Head of caudate nucleus (tissue), 42 donors: ENCODE measurements at regions of chr7 and their contacts with region 1.

Region 1: DNA sequence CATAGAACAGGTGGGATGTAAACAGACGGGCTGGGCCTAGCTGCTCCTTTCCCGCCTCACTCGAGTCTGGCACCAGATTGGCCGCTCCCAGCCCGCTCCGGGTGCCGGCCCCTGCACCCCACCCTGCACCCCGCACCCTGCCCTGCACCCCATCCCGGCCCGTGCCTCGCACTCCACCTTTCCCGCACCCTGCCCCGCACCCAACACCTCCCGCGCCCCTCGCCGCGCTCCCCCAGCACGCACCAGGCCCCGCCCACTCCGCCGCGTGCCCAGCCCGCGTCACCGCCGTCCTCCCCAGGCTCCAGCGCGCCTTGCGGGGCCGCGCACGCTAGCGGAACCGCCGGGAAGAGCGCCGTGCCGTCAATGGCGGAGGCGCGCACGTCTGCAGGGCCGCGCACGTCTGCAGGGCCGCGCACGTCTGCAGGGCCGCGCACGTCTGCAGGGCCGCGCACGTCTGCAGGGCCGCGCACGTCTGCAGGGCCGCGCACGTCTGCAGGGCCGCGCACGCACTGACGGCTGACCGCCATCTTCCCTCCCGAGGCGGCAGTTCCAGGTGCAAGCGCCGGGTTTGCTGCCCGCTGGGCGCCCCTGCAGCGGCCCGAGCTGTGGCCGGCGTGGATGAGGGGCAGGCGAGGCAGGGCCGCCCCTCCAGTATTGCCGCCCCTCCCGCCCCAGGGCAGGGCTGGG is at the start of gene UBE3C:
- DNase-seq: peak; percentile 64 to 96 (median 90)

Region 2: GRCh38 chr7:156875766-156876165 is 262.8 kb before region 1 on chr7:
- intact Hi-C with region 1: no loop called
- DNase-seq: no peak

Region 3: GRCh38 chr7:156892821-156893706 is 245.5 kb before region 1 on chr7 and contains the start of gene LMBR1:
- intact Hi-C with region 1: loop called (anchors 10 kb)
- DNase-seq: peak; percentile 83 to 97 (median 94)

Region 4: GRCh38 chr7:156949541-156950380 is 188.8 kb before region 1 on chr7 and contains the start of gene NOM1:
- intact Hi-C with region 1: loop called (anchors 10 kb)
- DNase-seq: peak; percentile 68 to 95 (median 89)

Region 5: GRCh38 chr7:157219154-157219553 is 80.6 kb after region 1 on chr7:
- intact Hi-C with region 1: no loop called
- DNase-seq: peak in 25 of 42 donors; percentile 13 to 77 (median 34)

Region 6: DNA sequence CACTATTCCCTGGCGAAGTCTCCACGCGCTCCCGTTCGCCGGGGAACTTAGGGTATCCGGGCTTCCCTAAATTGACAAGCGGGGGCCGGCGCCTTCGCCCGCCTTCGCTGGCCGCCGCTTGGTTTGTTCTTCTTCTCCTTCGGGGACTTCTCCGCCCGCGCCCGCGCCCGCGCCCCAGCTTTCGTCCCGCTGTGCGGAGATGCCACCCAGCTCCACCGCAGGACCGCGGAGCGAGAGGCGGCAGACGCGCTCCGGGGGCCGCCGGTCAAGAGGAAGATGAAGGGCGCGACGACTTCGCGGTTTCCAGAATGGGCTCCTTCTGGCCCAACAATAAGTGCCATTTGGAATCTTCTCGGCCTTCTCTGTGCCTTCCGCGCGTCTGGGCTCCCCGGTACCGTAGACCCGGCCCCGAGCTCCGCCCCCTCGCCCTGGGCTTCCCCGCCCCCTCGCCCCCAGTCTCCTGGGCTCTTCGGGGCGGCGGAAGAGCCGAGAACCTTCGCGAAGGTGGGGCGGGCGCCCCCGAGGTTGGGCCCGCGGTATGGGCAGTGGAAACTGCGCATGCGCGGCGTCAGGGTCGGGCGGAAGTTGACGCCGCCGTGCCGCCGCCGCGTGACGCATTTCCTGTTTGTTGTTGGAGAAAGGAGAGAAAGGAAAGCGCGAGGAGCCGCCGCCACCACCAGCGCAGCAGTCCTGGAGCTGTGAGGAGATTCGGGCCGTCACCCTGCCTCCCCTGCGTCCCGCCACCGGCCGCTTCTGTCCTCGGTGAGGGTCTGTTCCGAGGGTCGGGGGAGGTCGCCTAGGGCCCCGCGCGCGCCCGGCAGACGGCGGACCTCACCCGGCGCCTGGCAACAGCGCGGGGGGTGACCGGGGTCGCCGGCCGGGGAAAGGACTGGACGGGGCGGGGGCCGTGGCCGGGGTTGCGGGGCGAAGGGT is 198.1 kb after region 1 on chr7 and contains the start of gene DNAJB6:
- intact Hi-C with region 1: loop called (anchors 5 kb)
- DNase-seq: peak; percentile 77 to 97 (median 92)

Region 7: GRCh38 chr7:157386979-157387800 is 248.6 kb after region 1 on chr7:
- intact Hi-C with region 1: no loop called
- DNase-seq: peak; percentile 44 to 92 (median 76)